MCF 10A (cell line): ENCODE measurements at regions of chr12 and their contacts with region 1.

Region 1: GRCh38 chr12:127108360-127109215 is 1158.4 kb upstream of the TMEM132C start:
- DNase-seq: peak; percentile 81
- H3K4me3 Mint-ChIP-seq: no peak overlapping the region
- H3K27ac Mint-ChIP-seq: peak overlapping the region; percentile 59
- H3K4me1 Mint-ChIP-seq: peaks cover 22% of the 10 kb centered on the region
- H3K27me3 Mint-ChIP-seq: no peaks in the 10 kb centered on the region
- CTCF ChIP-seq: peak; percentile 75

Region 2: DNA sequence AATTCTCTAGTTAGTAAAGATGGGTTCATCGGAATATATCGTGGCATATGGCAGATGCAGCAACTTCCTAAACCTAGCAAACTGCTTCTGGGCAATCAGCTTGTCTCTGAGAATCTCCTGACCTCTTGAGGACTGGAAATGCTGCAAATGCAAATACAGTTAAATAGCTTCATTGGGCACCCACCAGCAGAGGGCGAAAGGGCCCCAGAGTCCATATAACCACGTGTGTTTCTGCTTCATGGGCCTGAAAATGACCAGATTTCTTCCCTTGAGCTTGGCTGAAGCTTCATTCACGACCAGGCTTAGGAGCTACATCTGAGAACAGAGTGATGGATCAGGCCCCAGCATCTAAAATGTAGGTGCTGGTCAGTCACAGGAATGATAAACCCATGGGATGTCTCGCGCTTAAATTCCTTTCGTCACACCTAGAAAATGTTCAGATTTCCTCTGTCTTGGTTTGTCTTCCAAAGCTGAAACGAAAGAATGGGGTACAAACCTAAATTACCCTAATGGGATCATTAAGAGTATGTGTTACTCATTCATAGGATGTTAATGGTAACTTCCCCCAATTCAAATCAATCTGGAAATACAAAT is 324.2 kb before region 1 on chr12:
- CTCF ChIA-PET with region 1: interaction called, 11 read pairs
- POLR2A ChIA-PET with region 1: no interaction called
- intact Hi-C with region 1: no loop called
- DNase-seq: peak; percentile 64
- H3K4me3 Mint-ChIP-seq: no peak overlapping the region
- H3K27ac Mint-ChIP-seq: no peak overlapping the region
- H3K4me1 Mint-ChIP-seq: no peaks in the 10 kb centered on the region
- H3K27me3 Mint-ChIP-seq: peaks cover 28% of the 10 kb centered on the region
- CTCF ChIP-seq: peak; percentile 70

Region 3: DNA sequence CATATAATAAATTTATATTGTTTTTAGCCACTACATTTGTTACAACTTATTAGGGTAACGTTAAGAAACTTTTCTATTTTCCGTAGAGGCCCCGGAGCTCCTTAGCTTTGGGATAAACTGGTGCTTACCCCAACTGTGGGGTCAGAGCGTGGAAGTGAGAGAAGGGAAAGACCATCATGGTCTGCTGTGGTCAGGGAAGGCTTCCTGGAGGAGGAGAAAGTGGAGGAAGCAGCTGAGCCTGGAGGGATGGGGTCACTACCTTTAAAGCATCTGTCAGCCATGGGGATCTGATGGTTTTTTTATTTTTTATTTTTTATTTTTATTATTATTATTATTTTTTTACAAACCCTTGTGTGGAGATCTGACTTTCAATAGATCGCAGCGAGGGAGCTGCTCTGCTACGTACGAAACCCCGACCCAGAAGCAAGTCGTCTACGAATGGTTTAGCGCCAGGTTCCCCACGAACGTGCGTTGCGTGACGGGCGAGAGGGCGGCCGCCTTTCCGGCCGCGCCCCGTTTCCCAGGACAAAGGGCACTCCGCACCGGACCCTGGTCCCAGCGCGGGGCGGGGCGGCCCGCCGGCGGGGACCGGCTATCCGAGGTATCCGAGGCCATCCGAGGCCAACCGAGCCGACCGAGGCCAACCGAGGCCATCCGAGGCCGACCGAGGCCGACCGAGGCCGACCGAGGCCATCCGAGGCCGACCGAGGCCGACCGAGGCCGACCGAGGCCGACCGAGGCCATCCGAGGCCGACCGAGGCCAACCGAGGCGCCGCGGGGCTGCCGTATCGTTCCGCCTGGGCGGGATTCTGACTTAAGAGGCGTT is 57.2 kb after region 1 on chr12:
- CTCF ChIA-PET with region 1: interaction called, 10 read pairs
- POLR2A ChIA-PET with region 1: no interaction called
- intact Hi-C with region 1: no loop called
- DNase-seq: peak; percentile 80
- H3K4me3 Mint-ChIP-seq: peak overlapping the region; percentile 68
- H3K27ac Mint-ChIP-seq: peak overlapping the region; percentile 64
- H3K4me1 Mint-ChIP-seq: peaks cover 29% of the 10 kb centered on the region
- H3K27me3 Mint-ChIP-seq: no peaks in the 10 kb centered on the region
- CTCF ChIP-seq: no peak

Region 4: GRCh38 chr12:127249428-127249827 is 140.8 kb after region 1 on chr12:
- CTCF ChIA-PET with region 1: interaction called, 13 read pairs
- POLR2A ChIA-PET with region 1: no interaction called
- intact Hi-C with region 1: no loop called
- DNase-seq: no peak
- H3K4me3 Mint-ChIP-seq: no peak overlapping the region
- H3K27ac Mint-ChIP-seq: no peak overlapping the region
- H3K4me1 Mint-ChIP-seq: peaks cover 8% of the 10 kb centered on the region
- H3K27me3 Mint-ChIP-seq: no peaks in the 10 kb centered on the region
- CTCF ChIP-seq: no peak

Region 5: DNA sequence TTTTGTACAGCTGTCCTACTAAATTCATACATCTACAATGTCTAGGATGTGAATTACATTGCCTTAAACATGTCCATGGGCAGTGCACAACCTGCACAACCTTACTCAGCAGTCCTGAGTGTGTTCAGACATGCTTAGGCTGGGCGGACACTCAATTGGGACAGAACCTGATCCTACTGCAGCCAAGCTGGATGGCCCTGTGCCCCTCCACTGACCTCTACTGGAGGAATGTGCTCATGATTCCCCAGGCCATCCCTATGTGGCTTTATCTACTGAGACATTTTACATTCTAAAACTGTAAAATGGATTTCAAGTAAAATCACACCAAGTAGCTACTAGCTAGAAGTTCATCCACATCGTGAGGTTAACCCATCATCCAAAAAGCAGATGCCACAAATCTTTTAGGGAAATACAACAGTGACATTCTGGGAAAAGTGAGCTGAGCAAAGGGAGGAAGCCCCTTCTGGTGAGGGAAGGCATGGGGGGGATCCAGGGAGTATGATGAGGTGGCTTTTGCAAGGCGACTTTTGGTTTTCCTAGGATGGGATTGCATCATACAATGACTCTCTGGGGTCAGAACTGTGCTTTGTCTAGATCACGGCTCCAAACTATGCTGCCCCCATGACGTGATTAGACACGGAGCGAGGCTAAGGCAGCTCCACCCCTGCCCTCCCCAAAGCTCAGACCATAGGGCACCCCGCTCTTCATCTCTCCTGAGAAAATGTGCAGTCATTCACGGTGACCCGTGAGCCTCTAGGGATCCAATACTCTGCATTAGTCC is 246.7 kb after region 1 on chr12:
- CTCF ChIA-PET with region 1: interaction called, 36 read pairs
- POLR2A ChIA-PET with region 1: no interaction called
- intact Hi-C with region 1: loop called (anchors 5 kb)
- DNase-seq: peak; percentile 48
- H3K4me3 Mint-ChIP-seq: no peak overlapping the region
- H3K27ac Mint-ChIP-seq: no peak overlapping the region
- H3K4me1 Mint-ChIP-seq: no peaks in the 10 kb centered on the region
- H3K27me3 Mint-ChIP-seq: no peaks in the 10 kb centered on the region
- CTCF ChIP-seq: peak; percentile 55

Region 6: DNA sequence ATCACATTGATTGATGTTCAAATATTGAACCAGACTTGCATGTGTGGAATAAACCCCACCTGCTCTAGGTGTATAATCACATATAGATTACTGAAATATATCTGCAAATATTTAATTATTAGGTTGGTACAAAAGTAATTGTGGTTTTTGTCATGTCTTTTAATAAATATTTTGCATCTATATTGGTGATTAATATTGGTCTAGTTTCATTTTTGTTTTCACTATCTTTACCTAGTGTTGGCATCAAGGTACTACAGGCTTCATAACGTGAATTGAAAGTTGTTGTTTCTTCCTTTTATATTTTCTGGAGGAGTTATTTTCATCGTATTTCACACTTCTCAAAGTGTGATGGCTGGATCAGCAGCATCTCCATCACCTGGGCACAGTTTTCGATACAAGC is 418.3 kb after region 1 on chr12:
- CTCF ChIA-PET with region 1: no interaction called
- POLR2A ChIA-PET with region 1: no interaction called
- intact Hi-C with region 1: no loop called
- DNase-seq: no peak
- H3K4me3 Mint-ChIP-seq: no peak overlapping the region
- H3K27ac Mint-ChIP-seq: no peak overlapping the region
- H3K4me1 Mint-ChIP-seq: no peaks in the 10 kb centered on the region
- H3K27me3 Mint-ChIP-seq: no peaks in the 10 kb centered on the region
- CTCF ChIP-seq: no peak

Region 7: DNA sequence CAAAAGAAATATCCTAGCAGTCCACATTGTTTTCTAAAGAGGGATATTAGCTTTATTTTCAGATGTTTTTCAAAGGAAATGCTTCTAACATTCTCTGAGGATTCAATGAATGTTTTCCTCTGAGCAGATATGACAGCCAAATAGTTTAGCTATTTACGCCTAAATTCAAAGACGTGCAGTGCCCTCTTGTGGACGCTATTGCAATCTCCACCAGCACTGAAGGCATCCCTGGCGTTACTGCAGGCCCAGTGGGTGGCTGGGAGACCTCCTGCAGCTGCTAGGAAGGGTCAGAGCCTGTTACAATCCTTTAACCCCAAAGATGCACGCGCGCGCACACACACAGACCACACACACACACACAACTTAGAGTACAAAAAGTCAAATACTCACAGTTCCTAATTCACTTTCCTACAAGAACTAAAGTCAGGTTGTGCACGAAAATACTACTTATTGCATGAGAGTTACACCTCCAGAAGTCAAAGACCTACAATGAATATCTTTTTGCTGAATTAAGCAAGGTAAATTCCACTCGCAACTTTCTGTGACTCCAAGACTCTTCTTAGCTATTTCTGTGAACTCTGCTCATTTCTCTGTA is 569.0 kb after region 1 on chr12:
- CTCF ChIA-PET with region 1: no interaction called
- POLR2A ChIA-PET with region 1: no interaction called
- intact Hi-C with region 1: loop called (anchors 5 kb)
- DNase-seq: peak; percentile 75
- H3K4me3 Mint-ChIP-seq: no peak overlapping the region
- H3K27ac Mint-ChIP-seq: no peak overlapping the region
- H3K4me1 Mint-ChIP-seq: no peaks in the 10 kb centered on the region
- H3K27me3 Mint-ChIP-seq: no peaks in the 10 kb centered on the region
- CTCF ChIP-seq: peak; percentile 53

Region 8: DNA sequence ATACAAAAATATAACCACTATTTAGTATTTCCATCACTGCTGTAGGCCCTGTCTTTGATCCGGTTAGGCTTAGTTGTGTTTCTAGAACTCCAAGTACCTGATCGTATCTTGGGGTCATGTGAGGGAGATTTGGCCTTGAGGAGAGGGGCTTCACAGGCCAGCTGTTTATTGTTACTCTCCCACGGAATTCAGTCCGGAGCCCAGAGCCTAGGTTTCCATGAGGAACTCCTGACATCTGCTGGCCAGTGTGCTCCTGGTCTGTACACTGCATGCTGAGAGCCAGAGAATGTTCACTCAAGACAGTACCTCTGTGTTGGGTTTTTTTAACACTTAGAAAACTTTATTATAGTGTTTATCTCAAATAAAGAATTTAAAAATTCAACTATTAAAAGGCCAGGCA is 817.4 kb after region 1 on chr12:
- CTCF ChIA-PET with region 1: no interaction called
- POLR2A ChIA-PET with region 1: no interaction called
- intact Hi-C with region 1: no loop called
- DNase-seq: no peak
- H3K4me3 Mint-ChIP-seq: no peak overlapping the region
- H3K27ac Mint-ChIP-seq: no peak overlapping the region
- H3K4me1 Mint-ChIP-seq: no peaks in the 10 kb centered on the region
- H3K27me3 Mint-ChIP-seq: no peaks in the 10 kb centered on the region
- CTCF ChIP-seq: no peak